IMR-90 (cell line): ENCODE measurements at regions of chr11 and their contacts with region 1.

Region 1: GRCh38 chr11:58513747-58514367 is 6.0 kb upstream of the OR5B21 start:
- DNase-seq: peak; percentile 76
- ATAC-seq: peak; percentile 90
- H3K4me3 ChIP-seq: no peak overlapping the region
- H3K27ac ChIP-seq: no peak overlapping the region
- H3K4me1 ChIP-seq: peaks cover 5% of the 10 kb centered on the region
- H3K27me3 ChIP-seq: no peaks in the 10 kb centered on the region
- CTCF ChIP-seq: peak; percentile 84
- POLR2A ChIP-seq: no peak
- RAD21 ChIP-seq: peak; percentile 95

Region 2: DNA sequence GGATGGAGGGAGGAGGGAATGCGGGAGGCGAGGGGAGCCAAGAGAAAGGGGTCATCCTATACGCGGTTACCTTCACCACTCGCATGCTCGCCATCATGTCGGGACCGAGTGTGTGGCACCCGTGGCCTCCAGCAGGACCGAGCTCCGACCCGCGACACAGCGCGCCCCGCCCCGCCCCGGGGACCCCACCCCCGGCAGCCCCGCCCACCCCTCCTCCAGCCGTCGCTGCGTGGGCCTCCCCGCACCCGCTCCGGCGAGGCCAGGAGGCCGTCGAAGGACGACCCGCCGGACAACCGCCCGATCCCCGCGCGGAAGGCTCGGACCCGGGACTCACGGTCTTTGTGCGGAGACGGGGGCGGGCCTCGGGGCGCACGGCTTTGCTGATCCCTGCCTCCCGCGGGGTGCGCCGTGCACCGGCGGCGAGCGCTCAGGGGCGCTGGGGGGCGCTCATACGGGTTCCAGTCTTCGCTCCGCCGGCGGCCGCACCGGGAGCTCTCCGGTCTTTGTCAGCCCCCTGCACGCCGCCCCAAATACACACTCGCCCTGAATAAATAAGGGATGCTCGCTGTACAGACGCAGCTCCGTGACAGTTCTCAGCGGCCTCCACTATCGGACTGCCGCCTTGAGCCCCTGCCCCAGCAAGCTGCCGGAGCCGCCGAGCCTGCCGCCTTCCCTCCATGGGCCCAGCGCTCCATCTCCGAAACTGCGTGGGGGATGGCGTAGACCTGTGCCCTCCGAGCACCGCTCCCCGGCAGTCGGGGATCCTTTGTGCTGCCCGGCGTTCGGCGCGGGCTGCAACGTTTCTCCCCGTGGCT is 946.1 kb before region 1 on chr11 and contains the start of gene UBE2L6:
- CTCF ChIA-PET with region 1: no interaction called
- POLR2A ChIA-PET with region 1: no interaction called
- dilution Hi-C with region 1: no loop called
- in situ Hi-C with region 1: no loop called
- intact Hi-C with region 1: loop called (anchors 2 kb)
- DNase-seq: no peak
- ATAC-seq: peak; percentile 81
- H3K4me3 ChIP-seq: peak within 1 kb of the TSS; percentile 80
- H3K27ac ChIP-seq: peak within 1 kb of the TSS; percentile 83
- H3K4me1 ChIP-seq: peaks cover 11% of the 10 kb centered on the region
- H3K27me3 ChIP-seq: no peaks in the 10 kb centered on the region
- CTCF ChIP-seq: peak; percentile 39
- POLR2A ChIP-seq: no peak
- RAD21 ChIP-seq: no peak
- total RNA-seq, gene UBE2L6: 34.4 and 37.5 TPM in 2 replicates

Region 3: DNA sequence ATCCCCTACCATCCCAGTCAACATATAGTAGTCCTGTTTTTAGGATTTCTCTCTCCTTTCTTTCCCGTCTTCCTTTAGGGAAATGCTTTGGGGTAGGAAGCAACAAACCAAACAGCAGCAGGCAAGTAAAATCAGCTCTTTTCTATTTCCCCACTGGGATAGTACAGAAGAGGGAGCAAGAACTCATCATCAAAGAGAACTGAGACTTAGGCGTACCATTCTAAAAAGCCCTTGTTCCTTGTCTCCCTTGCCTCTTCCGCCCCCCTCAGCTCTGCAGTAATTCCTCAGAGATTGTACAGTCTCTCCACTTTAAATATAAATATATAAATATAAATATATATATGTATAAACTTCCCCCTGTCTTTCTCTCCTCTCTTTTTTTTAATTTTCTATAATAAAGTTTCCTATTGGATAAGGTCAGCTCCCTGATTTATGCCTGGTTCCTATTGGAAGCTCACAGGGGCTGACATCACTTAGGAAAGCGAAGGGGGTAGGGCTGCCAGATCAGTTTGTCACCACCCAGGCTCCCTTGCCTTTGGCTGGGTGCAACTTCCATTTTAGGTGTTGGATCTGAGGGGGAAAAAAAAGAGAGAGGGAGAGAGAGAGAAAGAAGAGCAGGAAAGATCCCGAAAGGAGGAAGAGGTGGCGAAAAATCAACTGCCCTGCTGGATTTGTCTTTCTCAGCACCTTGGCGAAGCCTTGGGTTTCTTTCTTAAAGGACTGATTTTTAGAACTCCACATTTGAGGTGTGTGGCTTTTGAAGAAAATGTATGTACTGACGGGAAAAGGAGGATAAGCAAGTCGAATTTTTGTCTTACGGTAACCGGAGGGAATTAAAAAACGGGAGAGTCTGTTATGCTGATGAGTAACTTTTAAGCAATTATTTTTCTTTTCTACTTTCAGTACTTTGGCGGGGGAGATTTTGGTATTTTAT is 752.3 kb before region 1 on chr11 and contains the start of gene CTNND1:
- CTCF ChIA-PET with region 1: no interaction called
- POLR2A ChIA-PET with region 1: no interaction called
- dilution Hi-C with region 1: no loop called
- in situ Hi-C with region 1: no loop called
- intact Hi-C with region 1: loop called (anchors 5 kb)
- DNase-seq: peak; percentile 98
- ATAC-seq: peak; percentile 96
- H3K4me3 ChIP-seq: peak within 1 kb of the TSS; percentile 99
- H3K27ac ChIP-seq: peak within 1 kb of the TSS; percentile 100
- H3K4me1 ChIP-seq: peaks cover 8% of the 10 kb centered on the region
- H3K27me3 ChIP-seq: no peaks in the 10 kb centered on the region
- CTCF ChIP-seq: no peak
- POLR2A ChIP-seq: peak; percentile 84; the same call in 1 of the 2 replicates
- RAD21 ChIP-seq: no peak
- total RNA-seq, gene CTNND1: 193 and 229 TPM in 2 replicates

Region 4: GRCh38 chr11:58024601-58025091 is 489.2 kb before region 1 on chr11:
- CTCF ChIA-PET with region 1: no interaction called
- POLR2A ChIA-PET with region 1: no interaction called
- dilution Hi-C with region 1: no loop called
- in situ Hi-C with region 1: no loop called
- intact Hi-C with region 1: loop called (anchors 5 kb)
- DNase-seq: peak; percentile 60
- ATAC-seq: no peak
- H3K4me3 ChIP-seq: no peak overlapping the region
- H3K27ac ChIP-seq: peak overlapping the region; percentile 66; the same call in 1 of the 2 replicates
- H3K4me1 ChIP-seq: peaks cover 23% of the 10 kb centered on the region
- H3K27me3 ChIP-seq: no peaks in the 10 kb centered on the region
- CTCF ChIP-seq: no peak
- POLR2A ChIP-seq: no peak
- RAD21 ChIP-seq: no peak

Region 5: DNA sequence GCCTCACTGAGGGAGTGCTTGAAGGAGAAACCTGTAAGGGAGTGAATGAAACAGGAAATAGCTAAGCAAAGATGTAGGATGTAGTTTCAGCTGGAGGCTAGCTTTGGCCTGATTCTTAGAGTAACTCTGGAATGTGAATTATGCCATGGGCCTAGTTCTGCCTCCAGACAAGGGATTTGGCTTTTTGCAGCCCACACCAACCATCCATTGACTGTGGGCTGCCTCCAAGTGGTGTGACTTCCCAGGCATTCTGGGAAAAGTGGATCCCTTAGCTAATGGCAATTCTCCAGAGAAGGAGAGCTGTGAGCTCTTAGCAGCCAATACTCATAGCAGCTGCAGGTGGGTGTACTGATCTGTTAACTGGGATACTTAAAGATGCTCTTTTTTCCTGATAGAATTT is 386.5 kb before region 1 on chr11:
- CTCF ChIA-PET with region 1: no interaction called
- POLR2A ChIA-PET with region 1: no interaction called
- dilution Hi-C with region 1: no loop called
- in situ Hi-C with region 1: no loop called
- intact Hi-C with region 1: loop called (anchors 10 kb)
- DNase-seq: peak; percentile 1
- ATAC-seq: peak; percentile 37
- H3K4me3 ChIP-seq: no peak overlapping the region
- H3K27ac ChIP-seq: no peak overlapping the region
- H3K4me1 ChIP-seq: peaks cover 2% of the 10 kb centered on the region
- H3K27me3 ChIP-seq: no peaks in the 10 kb centered on the region
- CTCF ChIP-seq: no peak
- POLR2A ChIP-seq: no peak
- RAD21 ChIP-seq: no peak

Region 6: GRCh38 chr11:58316142-58316541 is 197.7 kb before region 1 on chr11:
- CTCF ChIA-PET with region 1: no interaction called
- POLR2A ChIA-PET with region 1: no interaction called
- dilution Hi-C with region 1: no loop called
- in situ Hi-C with region 1: no loop called
- intact Hi-C with region 1: loop called (anchors 5 kb)
- DNase-seq: peak; percentile 80
- ATAC-seq: peak; percentile 43
- H3K4me3 ChIP-seq: no peak overlapping the region
- H3K27ac ChIP-seq: peak overlapping the region; percentile 98
- H3K4me1 ChIP-seq: peaks cover 13% of the 10 kb centered on the region
- H3K27me3 ChIP-seq: no peaks in the 10 kb centered on the region
- CTCF ChIP-seq: no peak
- POLR2A ChIP-seq: no peak
- RAD21 ChIP-seq: no peak